CD4-positive, alpha-beta T cell (primary cell): ENCODE measurements at regions of chr5 and their contacts with region 1.

Region 1: GRCh38 chr5:51043745-51044144 is 339.5 kb upstream of the ISL1 start:
- DNase-seq: no peak
- ATAC-seq: no peak
- H3K4me3 ChIP-seq: no peak overlapping the region
- H3K4me3 Mint-ChIP-seq: no peak overlapping the region
- H3K27ac ChIP-seq: no peak overlapping the region
- H3K27ac Mint-ChIP-seq: no peak overlapping the region
- H3K4me1 ChIP-seq: no peaks in the 10 kb centered on the region
- H3K4me1 Mint-ChIP-seq: no peaks in the 10 kb centered on the region
- H3K27me3 ChIP-seq: no peaks in the 10 kb centered on the region
- H3K27me3 Mint-ChIP-seq: no peaks in the 10 kb centered on the region
- CTCF ChIP-seq: no peak

Region 2: DNA sequence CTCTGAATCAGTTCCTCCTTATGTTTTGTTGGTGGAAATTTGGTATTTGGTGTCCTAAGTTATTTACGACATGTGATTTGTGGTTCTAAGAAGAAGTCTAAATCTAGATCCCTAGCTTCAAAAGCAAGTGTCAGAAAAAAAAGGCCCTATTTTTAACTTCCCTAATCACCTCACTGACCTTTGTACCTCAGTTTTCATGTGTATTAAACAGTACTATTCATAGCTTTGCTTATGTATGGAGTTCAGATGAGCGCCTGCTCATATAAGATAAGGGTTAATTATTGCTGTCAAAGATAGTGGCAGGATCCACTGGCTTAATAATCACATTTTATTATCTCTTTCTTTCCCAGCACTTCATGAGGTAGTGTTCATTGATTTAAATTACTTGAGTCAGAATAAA is 59.1 kb before region 1 on chr5:
- CTCF ChIA-PET with region 1: no interaction called
- POLR2A ChIA-PET with region 1: no interaction called
- intact Hi-C with region 1: no loop called
- DNase-seq: no peak
- ATAC-seq: no peak
- H3K4me3 ChIP-seq: no peak overlapping the region
- H3K4me3 Mint-ChIP-seq: no peak overlapping the region
- H3K27ac ChIP-seq: no peak overlapping the region
- H3K27ac Mint-ChIP-seq: no peak overlapping the region
- H3K4me1 ChIP-seq: no peaks in the 10 kb centered on the region
- H3K4me1 Mint-ChIP-seq: no peaks in the 10 kb centered on the region
- H3K27me3 ChIP-seq: no peaks in the 10 kb centered on the region
- H3K27me3 Mint-ChIP-seq: peaks cover 24% of the 10 kb centered on the region
- CTCF ChIP-seq: no peak

Region 3: DNA sequence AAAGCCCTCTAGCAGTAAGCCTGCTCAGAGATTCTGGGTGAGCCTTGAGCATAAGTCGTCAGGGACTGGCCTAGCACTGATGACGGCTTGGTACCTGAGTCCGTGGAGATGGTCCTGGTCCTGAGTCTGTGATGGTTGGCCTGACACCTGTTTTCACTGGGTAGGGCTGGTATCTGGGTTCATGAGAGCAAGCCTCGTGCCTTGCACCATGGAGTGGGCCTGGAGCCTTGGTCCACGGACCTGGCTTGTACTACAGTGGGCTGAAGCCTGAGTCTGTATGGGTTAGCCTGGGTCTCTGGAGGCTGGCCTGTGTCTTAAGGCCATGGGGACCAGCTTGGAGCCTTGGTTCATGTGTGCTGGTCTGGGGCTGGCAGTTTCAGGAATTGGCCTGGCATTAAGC is 29.2 kb after region 1 on chr5:
- CTCF ChIA-PET with region 1: no interaction called
- POLR2A ChIA-PET with region 1: no interaction called
- intact Hi-C with region 1: loop called in 1 of 2 experiments (anchors 1 kb)
- DNase-seq: no peak
- ATAC-seq: no peak
- H3K4me3 ChIP-seq: no peak overlapping the region
- H3K4me3 Mint-ChIP-seq: no peak overlapping the region
- H3K27ac ChIP-seq: no peak overlapping the region
- H3K27ac Mint-ChIP-seq: no peak overlapping the region
- H3K4me1 ChIP-seq: no peaks in the 10 kb centered on the region
- H3K4me1 Mint-ChIP-seq: no peaks in the 10 kb centered on the region
- H3K27me3 ChIP-seq: no peaks in the 10 kb centered on the region
- H3K27me3 Mint-ChIP-seq: no peaks in the 10 kb centered on the region
- CTCF ChIP-seq: no peak